PC-9 (cell line): ENCODE measurements at regions of chr5 and their contacts with region 1.

Region 1: GRCh38 chr5:59473611-59474010 is 419.9 kb downstream of the PDE4D start:
- DNase-seq: no peak
- H3K4me3 ChIP-seq: no peak overlapping the region
- H3K27ac ChIP-seq: no peak overlapping the region
- H3K4me1 ChIP-seq: 0 out of 2 replicates have a peak, but pooled peaks cover 4% of the 10 kb centered on the region
- H3K27me3 ChIP-seq: no peaks in the 10 kb centered on the region
- CTCF ChIP-seq: no peak

Region 2: GRCh38 chr5:59337240-59337639 is 136.4 kb before region 1 on chr5:
- CTCF ChIA-PET with region 1: interaction called, 21 read pairs
- POLR2A ChIA-PET with region 1: no interaction called
- intact Hi-C with region 1: no loop called
- DNase-seq: no peak
- H3K4me3 ChIP-seq: no peak overlapping the region
- H3K27ac ChIP-seq: no peak overlapping the region
- H3K4me1 ChIP-seq: no peaks in the 10 kb centered on the region
- H3K27me3 ChIP-seq: no peaks in the 10 kb centered on the region
- CTCF ChIP-seq: no peak

Region 3: DNA sequence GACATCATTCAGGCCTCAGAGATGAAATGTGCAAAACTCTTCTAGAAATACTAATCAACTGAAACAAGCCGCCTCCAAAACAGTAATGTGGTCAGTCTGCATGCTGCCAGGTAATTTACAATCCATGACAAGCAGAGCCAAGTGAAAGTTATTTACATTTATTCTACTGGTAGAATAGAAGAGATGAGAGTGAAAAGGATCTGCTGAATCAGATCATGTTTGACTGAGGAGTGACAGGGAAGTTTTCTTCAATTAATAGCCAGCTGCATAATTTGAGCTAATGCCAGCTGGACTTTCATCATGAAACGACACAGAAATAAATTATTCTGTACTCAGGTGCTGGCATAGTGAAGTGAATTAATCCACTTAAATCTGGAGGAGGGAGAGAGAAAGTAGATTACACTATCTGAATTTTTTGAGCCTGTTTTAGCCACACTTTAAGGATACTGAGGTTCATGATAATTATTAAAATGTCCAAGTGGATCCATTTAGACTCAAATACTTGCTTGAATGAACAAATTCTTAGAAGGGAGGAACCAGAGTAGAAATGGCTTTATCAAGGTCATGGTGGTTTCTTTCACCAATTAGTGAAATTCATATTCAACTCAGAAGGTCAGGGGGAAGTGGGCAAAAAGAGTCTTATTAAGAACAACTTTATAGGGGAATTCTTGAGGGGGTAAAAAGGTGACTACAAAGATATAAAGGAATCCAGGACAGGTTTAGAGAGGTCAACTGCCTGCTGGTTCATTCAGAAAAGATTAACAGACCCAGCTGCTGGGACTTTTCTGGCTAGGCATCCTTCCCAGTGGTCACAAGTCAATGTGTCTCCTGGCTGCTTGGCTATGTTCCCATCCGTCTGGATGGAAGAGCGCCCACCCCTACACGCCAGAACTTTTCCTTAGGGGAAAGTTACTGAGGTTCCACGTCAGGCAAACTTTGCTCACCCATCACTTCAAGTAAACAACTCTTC is 69.5 kb after region 1 on chr5:
- CTCF ChIA-PET with region 1: no interaction called
- POLR2A ChIA-PET with region 1: no interaction called
- intact Hi-C with region 1: no loop called
- DNase-seq: no peak
- H3K4me3 ChIP-seq: no peak overlapping the region
- H3K27ac ChIP-seq: peak overlapping the region; percentile 35
- H3K4me1 ChIP-seq: peaks cover 37% of the 10 kb centered on the region
- H3K27me3 ChIP-seq: no peaks in the 10 kb centered on the region
- CTCF ChIP-seq: no peak